ENCODE measurements at regions of chr9 and their contacts with region 1.

Region 1: GRCh38 chr9:34591248-34591916 is 1.9 kb upstream of the CNTFR start:
- DNase-seq: peak; percentile 80
- ATAC-seq: peak; percentile 91
- H3K4me3 Mint-ChIP-seq: peak overlapping the region; percentile 9
- H3K27ac Mint-ChIP-seq: no peak overlapping the region
- H3K4me1 Mint-ChIP-seq: peaks cover 22% of the 10 kb centered on the region
- H3K27me3 Mint-ChIP-seq: peaks cover 83% of the 10 kb centered on the region

Region 2: GRCh38 chr9:34158362-34158869 is 433.0 kb before region 1 on chr9:
- CTCF ChIA-PET with region 1: no interaction called
- DNase-seq: no peak
- ATAC-seq: no peak
- H3K4me3 Mint-ChIP-seq: no peak overlapping the region
- H3K27ac Mint-ChIP-seq: no peak overlapping the region
- H3K4me1 Mint-ChIP-seq: no peaks in the 10 kb centered on the region
- H3K27me3 Mint-ChIP-seq: peaks cover 4% of the 10 kb centered on the region

Region 3: DNA sequence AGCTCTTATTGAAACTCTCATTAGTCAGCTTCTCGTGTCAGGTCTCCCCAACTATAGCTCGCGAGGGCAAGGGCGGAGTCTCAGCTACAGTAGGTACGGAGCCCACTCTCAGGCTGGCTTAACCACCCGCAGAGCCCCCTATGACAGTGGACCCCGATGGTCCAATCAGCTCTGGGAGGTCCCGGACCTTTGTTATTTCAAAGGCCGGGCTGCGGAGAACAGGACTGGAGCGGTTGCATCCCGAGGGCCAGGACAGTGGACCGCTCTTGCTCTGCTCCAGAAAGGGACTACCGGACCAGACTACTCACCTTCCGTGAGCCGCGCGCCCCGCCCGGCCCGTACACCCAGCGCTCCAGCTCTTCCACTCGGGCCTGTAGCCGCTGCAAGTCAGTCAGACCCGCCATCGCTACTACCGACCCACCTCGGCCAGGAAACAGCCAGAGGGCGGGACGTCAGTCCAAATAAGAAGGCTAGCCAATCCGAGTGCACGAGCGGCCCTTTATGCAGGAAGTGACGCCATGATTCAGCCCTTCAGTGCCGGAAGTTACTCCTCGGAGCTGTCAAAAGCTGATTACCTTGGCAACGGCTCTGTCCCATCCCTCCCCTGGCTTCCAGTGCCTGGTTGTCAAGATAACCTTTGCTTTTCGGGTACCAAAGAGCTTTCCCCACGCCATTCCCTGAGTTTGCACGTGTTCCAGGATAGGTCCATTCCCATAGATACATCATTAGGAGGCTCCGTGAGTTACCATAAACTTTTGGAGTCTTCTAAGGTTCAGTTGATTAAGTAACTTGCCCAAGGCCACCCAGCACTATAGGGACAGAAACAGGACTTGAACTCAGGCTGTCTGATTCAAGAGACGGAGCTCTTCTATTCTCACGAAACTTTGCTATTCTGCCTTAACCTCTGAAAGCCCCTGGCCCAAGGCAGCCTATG is 28.9 kb after region 1 on chr9 and contains the start of gene DCTN3:
- CTCF ChIA-PET with region 1: interaction called, 11 read pairs
- DNase-seq: peak; percentile 97
- ATAC-seq: peak; percentile 99
- H3K4me3 Mint-ChIP-seq: peak within 1 kb of the TSS; percentile 89
- H3K27ac Mint-ChIP-seq: peak within 1 kb of the TSS; percentile 81
- H3K4me1 Mint-ChIP-seq: peaks cover 25% of the 10 kb centered on the region
- H3K27me3 Mint-ChIP-seq: peaks cover 28% of the 10 kb centered on the region
- total RNA-seq, gene DCTN3: 106 to 120 TPM